ENCODE measurements at regions of chr12 and their contacts with region 1.

Region 1: GRCh38 chr12:55659486-55660385 is 23.0 kb downstream of the OR10P1 start:
- DNase-seq: peak; percentile 22
- ATAC-seq: peak; percentile 44
- H3K4me3 Mint-ChIP-seq: no peak overlapping the region
- H3K27ac Mint-ChIP-seq: no peak overlapping the region
- H3K4me1 Mint-ChIP-seq: no peaks in the 10 kb centered on the region
- H3K27me3 Mint-ChIP-seq: peaks cover 2% of the 10 kb centered on the region

Region 2: DNA sequence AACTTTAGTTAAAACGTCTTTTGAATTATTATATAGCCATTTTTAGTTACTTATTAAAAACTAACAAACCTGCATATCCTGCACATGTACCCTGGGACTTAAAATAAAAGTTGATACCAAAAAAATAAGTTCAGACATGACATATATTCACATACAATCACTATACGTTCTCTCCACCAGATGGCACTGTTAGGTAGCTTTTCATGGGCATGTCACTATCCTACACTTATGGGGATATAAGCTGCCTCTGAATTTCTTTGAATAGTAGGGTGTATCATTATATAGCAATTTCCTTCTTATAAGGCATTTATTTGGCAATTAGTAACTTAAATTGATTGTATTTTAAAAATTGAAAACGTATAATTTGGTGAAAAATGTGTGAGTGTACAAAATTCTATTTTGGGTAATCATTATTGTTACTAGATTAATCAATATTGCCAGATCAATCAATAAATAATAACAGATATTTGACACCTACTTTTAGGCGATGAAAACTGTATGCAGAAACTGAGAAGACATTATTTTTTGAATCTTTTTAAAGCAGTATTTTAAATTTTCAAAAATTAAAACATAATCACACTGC is 470.7 kb before region 1 on chr12:
- CTCF ChIA-PET with region 1: interaction called, 6 read pairs
- POLR2A ChIA-PET with region 1: no interaction called
- intact Hi-C with region 1: loop called (anchors 1 kb)
- DNase-seq: peak; percentile 59
- ATAC-seq: peak; percentile 81
- H3K4me3 Mint-ChIP-seq: no peak overlapping the region
- H3K27ac Mint-ChIP-seq: no peak overlapping the region
- H3K4me1 Mint-ChIP-seq: no peaks in the 10 kb centered on the region
- H3K27me3 Mint-ChIP-seq: peaks cover 32% of the 10 kb centered on the region

Region 3: DNA sequence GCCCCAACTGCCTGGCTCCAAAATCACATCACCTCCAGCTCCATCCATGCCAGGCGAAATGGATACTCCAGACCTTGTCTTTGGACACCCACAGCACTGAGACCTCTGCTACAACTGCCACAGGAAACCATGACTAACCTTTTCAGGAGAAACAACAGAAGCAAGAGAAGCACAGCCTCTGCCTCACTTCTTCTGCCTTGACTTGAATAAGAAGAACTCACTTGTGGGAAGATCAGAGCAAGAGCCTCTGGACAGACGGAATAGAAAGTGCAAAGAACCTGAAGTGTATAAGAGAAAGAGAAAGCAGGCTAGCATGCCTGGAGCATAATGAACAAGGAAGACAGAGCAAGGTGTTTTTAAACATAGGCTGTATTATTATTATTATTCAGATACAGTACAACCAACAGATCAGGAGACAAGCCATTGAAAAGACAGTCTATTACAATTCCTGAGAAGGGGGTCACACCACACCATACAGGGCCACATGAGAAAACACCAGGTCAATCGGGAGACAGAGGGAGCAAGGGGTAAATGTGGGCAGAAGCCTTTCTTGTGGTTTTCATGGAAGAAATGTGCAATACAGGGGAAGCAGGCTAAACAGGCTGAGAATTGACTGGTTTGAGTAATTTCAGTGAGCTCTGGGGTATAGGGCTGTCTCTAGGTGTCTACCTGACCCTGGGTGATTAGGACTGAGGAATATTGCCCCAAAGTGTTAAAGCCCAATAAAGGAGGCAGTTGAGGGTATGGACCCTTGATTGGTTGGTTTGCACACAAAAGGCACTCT is 30.5 kb before region 1 on chr12:
- CTCF ChIA-PET with region 1: interaction called, 18 read pairs
- POLR2A ChIA-PET with region 1: interaction called, 5 read pairs
- intact Hi-C with region 1: no loop called
- DNase-seq: peak; percentile 47
- ATAC-seq: peak; percentile 78
- H3K4me3 Mint-ChIP-seq: peak overlapping the region; percentile 7
- H3K27ac Mint-ChIP-seq: peak overlapping the region; percentile 57
- H3K4me1 Mint-ChIP-seq: peaks cover 21% of the 10 kb centered on the region
- H3K27me3 Mint-ChIP-seq: peaks cover 24% of the 10 kb centered on the region

Region 4: GRCh38 chr12:55647027-55647426 is 12.7 kb before region 1 on chr12:
- CTCF ChIA-PET with region 1: interaction called, 95 read pairs
- POLR2A ChIA-PET with region 1: no interaction called
- intact Hi-C with region 1: no loop called
- DNase-seq: no peak
- ATAC-seq: no peak
- H3K4me3 Mint-ChIP-seq: no peak overlapping the region
- H3K27ac Mint-ChIP-seq: no peak overlapping the region
- H3K4me1 Mint-ChIP-seq: peaks cover 38% of the 10 kb centered on the region
- H3K27me3 Mint-ChIP-seq: no peaks in the 10 kb centered on the region

Region 5: DNA sequence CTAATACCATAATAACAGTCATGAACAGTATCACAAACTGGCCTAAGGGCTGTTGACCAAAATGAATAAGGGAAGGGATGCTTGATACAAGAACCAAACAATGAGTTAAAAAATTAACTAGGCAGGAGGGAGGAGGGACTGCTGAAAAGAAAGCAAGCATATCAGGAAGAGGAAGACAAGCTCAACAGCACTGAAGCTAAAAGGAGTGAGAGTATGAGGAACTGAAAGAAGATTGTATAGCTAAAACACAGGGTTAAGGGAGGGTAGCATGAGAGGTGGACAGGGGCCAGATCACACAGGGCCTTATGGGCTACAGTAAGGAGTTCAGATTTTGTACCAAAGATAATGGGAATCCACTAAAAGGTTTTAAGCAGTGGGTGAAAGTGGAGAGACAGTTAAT is 13.9 kb after region 1 on chr12:
- CTCF ChIA-PET with region 1: interaction called, 13 read pairs
- POLR2A ChIA-PET with region 1: no interaction called
- intact Hi-C with region 1: no loop called
- DNase-seq: no peak
- ATAC-seq: no peak
- H3K4me3 Mint-ChIP-seq: no peak overlapping the region
- H3K27ac Mint-ChIP-seq: no peak overlapping the region
- H3K4me1 Mint-ChIP-seq: no peaks in the 10 kb centered on the region
- H3K27me3 Mint-ChIP-seq: peaks cover 12% of the 10 kb centered on the region

Region 6: DNA sequence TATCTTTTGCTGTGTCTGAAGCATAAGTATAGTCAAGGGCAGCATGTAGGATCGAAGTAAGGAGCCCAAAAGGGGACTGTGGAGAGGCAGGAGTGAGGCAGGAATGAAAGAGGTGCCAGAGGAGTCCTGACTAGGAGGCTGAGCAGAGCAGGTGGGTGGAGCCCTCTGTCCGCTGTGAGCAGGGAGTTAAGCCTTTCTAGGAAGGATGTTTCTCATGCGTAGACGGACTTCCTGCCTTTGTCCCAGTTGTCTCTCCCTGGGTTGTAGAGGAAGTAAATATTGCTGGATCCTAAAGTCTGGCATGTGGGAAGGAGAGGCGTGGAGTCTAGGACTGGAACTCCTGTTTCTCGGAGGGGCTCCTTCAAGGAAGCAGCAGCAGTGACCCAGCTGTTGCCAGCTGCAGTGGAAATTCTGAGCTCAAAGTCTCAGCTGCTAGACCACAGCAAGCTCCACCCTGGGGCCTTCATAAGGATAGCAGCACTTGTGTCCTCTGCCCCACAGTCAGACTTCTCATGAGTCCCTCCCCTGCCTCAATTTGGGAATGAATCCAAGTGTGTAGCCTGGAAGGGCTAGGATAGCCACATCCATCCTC is 905.9 kb after region 1 on chr12:
- CTCF ChIA-PET with region 1: no interaction called
- POLR2A ChIA-PET with region 1: no interaction called
- intact Hi-C with region 1: no loop called
- DNase-seq: peak; percentile 68
- ATAC-seq: peak; percentile 85
- H3K4me3 Mint-ChIP-seq: peak overlapping the region; percentile 6
- H3K27ac Mint-ChIP-seq: peak overlapping the region; percentile 11
- H3K4me1 Mint-ChIP-seq: peaks cover 24% of the 10 kb centered on the region
- H3K27me3 Mint-ChIP-seq: no peaks in the 10 kb centered on the region

Measured in activated CD4-positive, alpha-beta T cell treated with anti-CD3 and anti-CD28 coated beads for 36 hours (primary cell).